Sciatic nerve (tissue), 2 donors: ENCODE measurements at regions of chr7 and their contacts with region 1.

Region 1: DNA sequence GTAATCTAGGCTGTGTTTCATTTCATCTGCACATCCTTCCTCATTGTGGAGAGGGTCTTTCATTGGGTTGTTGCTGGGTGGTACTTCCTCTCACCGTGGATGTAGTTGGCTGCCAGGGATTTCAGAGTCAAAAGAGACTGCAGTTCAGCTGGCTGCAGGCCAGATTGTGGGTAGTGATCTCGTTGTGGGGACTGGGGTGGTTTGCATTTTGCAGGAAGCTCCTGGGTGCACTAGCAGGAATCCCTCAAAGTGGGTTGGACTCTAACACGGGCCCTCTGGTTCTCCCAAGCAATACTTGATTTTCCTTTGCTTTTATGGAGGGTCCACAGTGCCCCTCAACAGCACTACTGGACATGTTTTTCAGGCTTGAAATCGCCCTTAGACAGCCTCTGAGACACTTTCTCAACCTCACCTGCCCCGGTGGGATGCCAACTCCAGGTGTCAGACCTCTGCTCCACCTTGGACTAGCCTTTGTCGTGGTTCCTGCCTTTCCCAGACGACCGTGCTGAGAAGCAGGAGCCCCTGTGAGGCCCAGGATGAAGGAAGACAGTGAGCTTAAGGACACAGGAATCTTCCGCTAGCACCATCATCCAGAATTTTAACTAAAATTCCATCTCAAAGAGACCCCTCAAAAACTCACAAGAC is 23.9 kb upstream of the ZNF273 start:
- DNase-seq: no peak
- ATAC-seq: no peak

Region 2: DNA sequence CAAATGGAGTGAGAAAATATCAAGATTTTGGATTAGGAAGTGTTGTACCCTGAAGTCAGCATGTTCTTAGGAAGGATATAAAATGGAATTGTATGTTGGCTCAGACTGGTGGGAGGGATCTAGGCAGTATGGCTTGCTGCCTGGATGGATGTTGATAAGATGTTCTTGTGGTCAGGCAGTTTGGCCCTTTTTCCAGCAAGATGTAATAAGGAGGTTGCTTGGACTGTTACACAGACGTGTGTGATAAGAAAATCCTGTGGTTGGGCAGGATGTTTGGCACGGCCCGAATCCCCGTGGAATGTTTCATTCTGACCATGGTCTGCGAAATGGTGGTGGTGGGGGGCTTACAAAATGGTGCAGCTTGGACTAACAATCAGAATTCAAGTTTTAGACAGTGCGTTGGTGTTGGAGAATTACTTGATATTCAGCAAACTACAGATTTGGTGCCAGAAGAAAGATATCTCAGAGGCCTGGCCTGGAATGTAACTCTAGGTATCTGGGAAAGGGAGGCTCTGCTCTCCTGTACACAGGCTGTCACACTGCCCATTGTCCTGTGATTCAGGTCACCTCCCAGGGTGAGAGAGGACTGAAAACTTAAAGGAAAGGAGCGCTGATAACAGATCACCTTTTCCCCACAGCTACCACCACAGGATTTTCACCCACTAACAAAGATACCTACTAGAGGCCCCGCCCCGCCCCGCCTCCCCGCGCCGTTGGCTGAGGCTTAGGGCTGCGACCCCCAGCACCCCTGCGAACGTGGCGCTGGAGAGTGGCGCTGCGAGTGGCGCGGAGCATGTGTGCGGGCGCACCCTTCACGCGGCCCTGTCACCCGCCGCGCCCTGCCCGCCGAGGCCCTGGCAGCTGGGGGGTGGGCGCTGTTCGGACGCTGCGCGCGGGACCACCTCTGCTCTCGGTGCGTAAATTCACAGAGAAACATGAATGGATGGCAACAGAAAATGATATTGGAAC is 297.0 kb before region 1 on chr7:
- intact Hi-C with region 1: no loop called
- DNase-seq: no peak
- ATAC-seq: no peak

Region 3: DNA sequence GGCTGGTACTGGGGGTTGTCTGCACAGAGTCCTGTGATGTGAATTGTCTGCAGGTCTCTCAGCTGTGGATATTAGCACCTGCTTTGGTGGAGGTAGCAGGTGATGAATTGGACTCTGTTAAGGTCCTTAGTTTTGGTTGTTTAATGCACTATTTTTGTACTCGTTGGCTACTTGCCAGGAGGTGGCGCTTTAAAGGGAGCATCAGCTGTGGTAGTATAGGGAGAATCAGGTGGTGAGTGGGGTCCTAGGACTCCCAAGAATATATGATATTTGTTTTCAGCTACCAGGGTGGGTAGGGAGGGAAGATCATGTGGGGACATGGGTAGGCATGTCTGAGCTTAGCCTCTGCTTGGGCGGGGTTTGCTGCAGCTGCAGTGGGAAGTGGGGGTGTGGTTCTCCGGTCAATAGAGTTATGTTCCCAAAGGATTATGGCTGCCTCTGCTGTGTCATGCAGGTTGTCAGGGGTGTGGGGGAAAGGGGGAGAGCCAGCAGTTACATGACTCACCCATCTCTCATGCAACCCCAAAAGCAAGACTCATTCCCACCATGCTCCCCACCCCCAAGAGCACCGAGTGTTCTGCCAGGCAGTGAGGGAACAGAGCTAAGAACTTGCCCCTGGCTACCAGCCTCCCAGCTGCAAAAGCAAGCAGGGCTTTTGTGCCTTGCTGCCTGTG is 29.8 kb before region 1 on chr7:
- intact Hi-C with region 1: loop called (anchors 1 kb)
- DNase-seq: no peak
- ATAC-seq: no peak

Region 4: DNA sequence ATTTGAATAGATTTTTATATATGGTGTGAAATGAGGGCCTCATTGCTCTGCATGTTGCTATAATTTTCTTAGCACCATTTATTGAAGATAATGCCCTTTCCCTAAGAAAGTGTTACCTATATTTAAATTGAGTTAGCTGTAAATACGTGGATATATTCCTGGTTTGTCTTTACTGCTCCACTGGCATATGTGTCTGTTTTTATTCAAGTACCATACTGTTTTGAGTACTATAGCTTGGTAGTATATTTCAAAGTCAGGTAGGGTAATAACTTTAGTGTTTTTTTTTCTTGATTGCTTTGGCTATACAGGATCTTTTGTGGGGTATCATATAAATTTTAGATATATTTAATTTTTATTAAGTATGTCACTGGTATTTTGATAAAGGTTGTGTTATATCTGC is 55.3 kb after region 1 on chr7:
- intact Hi-C with region 1: no loop called
- DNase-seq: no peak
- ATAC-seq: no peak